ENCODE measurements at regions of chr1 and their contacts with region 1.

Region 1: GRCh38 chr1:17581389-17582123 is 42.1 kb downstream of the ARHGEF10L start:
- DNase-seq: peak; percentile 95
- ATAC-seq: peak; percentile 75
- H3K4me3 ChIP-seq: peak overlapping the region; percentile 44 to 84 (median 82)
- H3K27ac ChIP-seq: peak overlapping the region; percentile 93
- H3K4me1 ChIP-seq: peaks cover 87% of the 10 kb centered on the region
- H3K27me3 ChIP-seq: no peaks in the 10 kb centered on the region
- CTCF ChIP-seq: peak; percentile 18
- EP300 ChIP-seq: peak; percentile 60 to 84; a peak in 2 of 4 replicates
- POLR2A ChIP-seq: peak; percentile 26 to 41; a peak in 3 of 4 replicates
- RAD21 ChIP-seq: no peak

Region 2: GRCh38 chr1:17502326-17502778 is 79.2 kb before region 1 on chr1:
- CTCF ChIA-PET with region 1: no interaction called
- POLR2A ChIA-PET with region 1: no interaction called
- in situ Hi-C with region 1: no loop called
- intact Hi-C with region 1: loop called (anchors 2 kb)
- DNase-seq: peak; percentile 56
- ATAC-seq: peak; percentile 97
- H3K4me3 ChIP-seq: no peak overlapping the region
- H3K27ac ChIP-seq: no peak overlapping the region
- H3K4me1 ChIP-seq: peaks cover 42% of the 10 kb centered on the region
- H3K27me3 ChIP-seq: peaks cover 0 to 6% of the 10 kb centered on the region in 2 experiments; a peak in 2 of 5 replicates
- CTCF ChIP-seq: peak; percentile 96
- EP300 ChIP-seq: no peak
- POLR2A ChIP-seq: no peak
- RAD21 ChIP-seq: peak; percentile 92

Region 3: DNA sequence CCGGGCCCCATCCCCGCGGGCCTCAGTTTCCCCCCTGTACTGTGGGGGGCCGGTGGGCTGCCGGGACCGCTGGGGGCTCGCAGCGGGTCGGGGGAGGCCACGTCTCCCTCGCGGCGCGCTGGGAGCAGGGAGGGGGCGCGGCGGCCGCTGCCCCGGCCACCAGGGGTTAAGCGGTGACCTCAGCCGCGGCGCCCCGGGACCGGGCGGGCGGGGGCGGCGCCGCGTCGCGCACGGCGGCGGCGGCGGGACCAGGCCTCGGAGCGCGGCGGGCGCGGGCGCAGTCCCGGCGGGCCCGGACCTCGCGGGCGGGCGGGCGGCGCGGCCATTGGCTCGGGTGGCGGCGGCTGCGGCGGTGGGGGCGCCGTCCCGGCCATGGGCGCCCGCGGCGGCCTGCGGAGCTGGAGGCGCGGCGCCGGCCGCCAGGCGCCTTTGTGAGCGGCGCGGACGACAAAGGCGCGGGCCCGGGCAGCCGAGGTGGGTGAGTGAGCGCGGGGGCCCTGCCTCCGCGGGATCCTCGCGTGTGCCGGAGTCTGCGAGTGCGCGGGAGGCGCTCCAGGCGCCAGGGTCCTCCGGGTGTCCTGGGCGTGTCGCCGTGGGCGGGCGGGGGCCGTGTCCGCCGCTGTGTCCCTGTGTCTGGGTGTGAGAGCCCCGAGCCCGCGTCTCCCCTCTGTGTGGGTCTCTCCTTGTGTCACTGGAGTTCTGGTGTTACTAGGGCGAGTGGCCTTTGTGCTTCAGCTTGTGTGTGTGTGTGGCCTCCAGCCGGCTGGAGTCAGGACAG is 41.9 kb before region 1 on chr1 and contains the start of gene ARHGEF10L:
- CTCF ChIA-PET with region 1: no interaction called
- POLR2A ChIA-PET with region 1: interaction called, 9 read pairs
- in situ Hi-C with region 1: no loop called
- intact Hi-C with region 1: loop called (anchors 2 kb)
- DNase-seq: no peak
- ATAC-seq: peak; percentile 42
- H3K4me3 ChIP-seq: peak within 1 kb of the TSS; percentile 75 to 86 (median 85)
- H3K27ac ChIP-seq: no peak within 1 kb of the TSS
- H3K4me1 ChIP-seq: peaks cover 49% of the 10 kb centered on the region
- H3K27me3 ChIP-seq: peaks cover 1 to 15% of the 10 kb centered on the region in 2 experiments; a peak in 2 of 5 replicates
- CTCF ChIP-seq: no peak
- EP300 ChIP-seq: no peak
- POLR2A ChIP-seq: no peak
- RAD21 ChIP-seq: no peak
- total RNA-seq, gene ARHGEF10L: 26.2 and 46.5 TPM in 2 replicates

Region 4: GRCh38 chr1:17569200-17570161 is 12.1 kb before region 1 on chr1:
- CTCF ChIA-PET with region 1: no interaction called
- POLR2A ChIA-PET with region 1: interaction called, 53 read pairs
- in situ Hi-C with region 1: no loop called
- intact Hi-C with region 1: no loop called
- DNase-seq: peak; percentile 44
- ATAC-seq: 0 out of 3 replicates have a peak, but pooled peaks have one; percentile 6
- H3K4me3 ChIP-seq: peak overlapping the region; percentile 25 to 45 (median 35); a peak in 5 of 6 replicates
- H3K27ac ChIP-seq: no peak overlapping the region
- H3K4me1 ChIP-seq: peaks cover 77% of the 10 kb centered on the region
- H3K27me3 ChIP-seq: no peaks in the 10 kb centered on the region
- CTCF ChIP-seq: no peak
- EP300 ChIP-seq: no peak
- POLR2A ChIP-seq: no peak
- RAD21 ChIP-seq: no peak

Measured in HepG2 (cell line).